Cardiac septum (tissue), 1 donor: ENCODE measurements at regions of chr1 and their contacts with region 1.

Region 1: DNA sequence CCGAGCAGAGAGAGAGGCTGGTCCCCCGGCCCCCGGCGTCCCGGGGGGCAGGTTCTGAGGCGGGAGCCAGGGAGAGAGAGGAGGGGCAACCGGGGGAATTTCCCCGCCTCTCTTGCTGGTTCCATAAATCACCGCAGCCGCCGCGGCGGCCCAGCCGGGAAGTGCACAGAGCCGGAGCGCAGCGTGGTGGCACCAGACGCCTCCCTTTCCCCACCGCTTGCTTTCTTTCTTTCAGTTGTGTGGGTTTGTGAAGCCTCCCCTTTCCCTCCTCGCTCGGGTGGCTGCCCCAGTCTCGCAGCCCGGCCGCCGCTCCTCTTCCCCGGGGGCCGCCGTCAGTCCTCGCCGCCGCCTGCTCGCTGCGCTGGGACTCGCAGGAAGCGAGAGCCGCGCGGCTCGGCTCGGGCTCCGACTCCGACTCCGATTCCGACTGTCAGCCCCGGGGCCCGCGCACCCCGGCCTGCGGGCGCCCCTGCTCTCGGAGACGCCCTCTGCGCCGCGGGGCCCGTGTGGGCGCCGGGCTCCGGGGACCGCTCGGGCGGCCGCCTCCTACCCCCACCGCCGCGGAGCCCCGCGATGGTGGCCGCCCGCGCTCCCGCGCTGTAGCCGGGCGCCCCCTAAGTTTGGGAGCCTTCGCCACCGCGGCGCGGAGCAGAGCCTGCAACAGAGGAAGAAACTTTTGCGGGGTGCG is at the start of gene CACHD1:
- DNase-seq: peak; percentile 86
- total RNA-seq, gene CACHD1: 2.9 TPM

Region 2: GRCh38 chr1:64514197-64514765 is 44.2 kb after region 1 on chr1:
- intact Hi-C with region 1: loop called (anchors 5 kb)
- DNase-seq: no peak

Region 3: GRCh38 chr1:64539781-64540218 is 69.7 kb after region 1 on chr1:
- intact Hi-C with region 1: loop called (anchors 5 kb)
- DNase-seq: no peak

Region 4: DNA sequence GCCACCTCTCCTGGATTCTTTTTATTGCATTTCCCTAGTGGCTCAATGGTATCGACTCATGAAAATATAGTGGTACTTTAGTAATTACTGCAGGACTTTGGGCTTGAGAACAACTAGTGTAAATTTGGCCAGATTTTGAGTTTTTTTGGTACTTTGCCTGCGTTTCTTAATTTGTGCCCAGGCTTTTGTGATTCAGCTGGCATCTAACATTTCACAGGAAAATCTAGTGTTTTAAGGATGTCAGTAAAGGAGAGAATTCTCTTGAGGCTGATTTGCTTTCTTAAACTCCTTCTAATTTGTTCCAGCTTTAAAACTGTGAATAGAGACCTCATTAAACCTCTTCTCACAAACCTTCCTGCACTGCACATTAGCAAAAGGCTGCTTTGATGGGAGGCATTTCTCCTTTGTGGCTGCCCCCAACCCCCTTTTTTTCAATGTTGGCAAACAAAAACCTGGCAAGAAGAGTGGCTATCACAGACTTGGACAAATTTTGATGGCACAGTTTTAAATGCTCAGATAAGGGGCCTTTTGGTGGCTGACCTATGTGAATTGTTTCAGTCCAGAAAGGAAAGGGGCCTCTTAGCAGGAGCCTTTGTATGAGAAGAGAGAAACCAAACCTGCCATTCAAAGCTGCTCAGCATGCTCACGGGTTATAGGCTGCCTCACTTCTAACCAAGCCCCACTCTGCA is 161.4 kb after region 1 on chr1:
- intact Hi-C with region 1: loop called (anchors 10 kb)
- DNase-seq: no peak

Region 5: GRCh38 chr1:64675718-64676345 is 205.7 kb after region 1 on chr1:
- intact Hi-C with region 1: loop called (anchors 5 kb)
- DNase-seq: no peak

Region 6: DNA sequence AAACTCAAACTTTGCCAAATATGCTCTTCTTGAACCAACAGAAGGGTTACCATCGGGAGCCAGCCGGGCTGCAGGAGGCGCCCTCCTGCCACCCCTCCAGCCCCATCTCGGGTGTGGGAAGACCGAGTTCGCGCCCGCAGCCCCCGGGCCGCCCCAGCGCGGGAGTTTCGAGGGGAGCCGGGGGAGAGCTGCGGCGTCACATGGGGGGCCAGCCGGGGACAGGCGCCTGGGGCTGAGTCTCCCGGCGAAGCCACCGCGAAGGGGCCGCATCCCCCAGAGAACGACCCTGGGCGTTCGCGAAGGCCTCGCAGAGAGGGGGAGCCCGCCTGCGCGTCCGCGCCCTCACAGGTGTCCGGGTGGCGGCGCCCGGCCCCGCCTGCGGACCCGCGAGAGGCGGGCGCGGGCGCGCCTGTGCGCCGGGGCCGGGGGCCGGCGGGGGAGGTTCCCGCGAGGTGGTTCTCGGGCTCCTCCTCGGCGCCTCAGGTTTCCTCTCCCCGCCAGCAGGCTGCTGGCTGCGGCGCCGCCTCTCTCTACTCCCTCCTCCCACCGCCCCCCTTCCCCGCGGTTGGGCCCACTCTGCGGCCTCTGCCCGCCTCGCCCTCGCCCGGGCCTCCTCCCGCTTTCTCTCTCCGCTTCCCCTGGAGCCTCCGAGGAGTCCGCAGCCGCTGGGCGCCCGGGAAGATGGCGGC is 274.5 kb after region 1 on chr1 and contains the start of gene RAVER2:
- intact Hi-C with region 1: loop called (anchors 10 kb)
- DNase-seq: peak; percentile 87
- total RNA-seq, gene RAVER2: 12.2 TPM

Region 7: DNA sequence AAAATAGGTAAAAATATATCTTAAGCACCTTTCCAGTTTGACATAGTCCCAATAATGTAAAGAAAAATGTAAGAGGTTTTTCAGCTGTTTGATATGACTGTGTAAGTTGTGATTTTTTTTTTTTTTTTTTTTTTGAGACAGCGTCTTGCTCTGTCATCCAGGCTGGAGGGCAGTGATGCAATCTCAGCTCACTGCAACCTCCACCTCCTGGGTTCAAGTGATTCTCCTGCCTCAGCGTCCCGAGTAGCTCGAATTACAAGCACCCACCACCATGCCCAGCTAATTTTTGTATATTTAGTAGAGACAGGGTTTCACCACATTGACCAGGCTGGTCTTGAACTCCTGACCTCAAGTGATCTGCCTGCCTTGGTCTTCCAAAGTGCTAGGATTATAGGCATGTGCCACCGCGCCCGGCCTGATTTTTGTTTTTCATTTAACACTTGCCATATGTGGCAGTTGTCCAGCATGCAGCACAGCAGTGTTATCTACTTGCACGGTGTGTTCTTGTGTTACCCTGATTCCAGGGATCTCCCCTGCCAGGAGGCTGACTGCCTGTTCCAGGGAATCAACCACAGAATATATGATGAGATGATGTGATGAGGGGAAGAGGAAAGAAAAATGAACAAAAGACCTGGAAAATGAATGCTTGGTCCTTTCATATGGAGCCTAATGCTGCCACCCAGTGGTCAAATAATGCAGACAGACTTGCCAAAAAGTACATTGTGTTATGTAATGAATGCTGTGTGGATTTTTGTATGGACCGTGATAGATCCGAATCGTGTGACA is 353.8 kb after region 1 on chr1:
- intact Hi-C with region 1: loop called (anchors 10 kb)
- DNase-seq: no peak